Sigmoid colon (tissue), 7 donors: ENCODE measurements at regions of chr12 and their contacts with region 1.

Region 1: GRCh38 chr12:65051218-65051617 is 69.9 kb downstream of the WIF1 start:
- DNase-seq: no peak
- H3K4me3 ChIP-seq: no peak overlapping the region
- H3K27ac ChIP-seq: no peak overlapping the region
- H3K4me1 ChIP-seq: no peaks in the 10 kb centered on the region
- H3K27me3 ChIP-seq: peaks cover 0 to 2% (median 0%) of the 10 kb centered on the region in 3 donors
- CTCF ChIP-seq: no peak
- EP300 ChIP-seq: no peak
- POLR2A ChIP-seq: no peak

Region 2: DNA sequence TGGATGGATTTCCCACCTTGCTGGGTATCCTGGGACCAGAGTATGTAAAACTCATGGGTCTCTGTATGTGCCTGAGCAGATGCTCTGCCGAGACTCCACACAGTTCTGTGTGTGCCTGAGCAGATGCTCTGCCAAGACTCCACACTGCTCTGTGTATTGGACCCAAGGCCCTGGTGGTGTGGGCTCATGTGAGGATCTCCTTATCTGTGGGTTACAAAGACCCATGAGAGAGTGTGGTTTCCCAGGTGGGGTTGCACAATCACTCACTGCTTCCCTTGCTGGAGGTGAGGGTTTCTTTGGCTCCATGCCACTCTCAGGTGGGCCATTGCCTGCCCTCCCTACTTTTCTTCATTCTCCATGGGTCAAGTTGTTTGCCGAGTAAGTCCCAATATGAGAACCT is 85.3 kb before region 1 on chr12:
- intact Hi-C with region 1: no loop called
- DNase-seq: no peak
- H3K4me3 ChIP-seq: no peak overlapping the region
- H3K27ac ChIP-seq: no peak overlapping the region
- H3K4me1 ChIP-seq: no peaks in the 10 kb centered on the region
- H3K27me3 ChIP-seq: no peaks in the 10 kb centered on the region
- CTCF ChIP-seq: no peak
- EP300 ChIP-seq: no peak
- POLR2A ChIP-seq: no peak

Region 3: DNA sequence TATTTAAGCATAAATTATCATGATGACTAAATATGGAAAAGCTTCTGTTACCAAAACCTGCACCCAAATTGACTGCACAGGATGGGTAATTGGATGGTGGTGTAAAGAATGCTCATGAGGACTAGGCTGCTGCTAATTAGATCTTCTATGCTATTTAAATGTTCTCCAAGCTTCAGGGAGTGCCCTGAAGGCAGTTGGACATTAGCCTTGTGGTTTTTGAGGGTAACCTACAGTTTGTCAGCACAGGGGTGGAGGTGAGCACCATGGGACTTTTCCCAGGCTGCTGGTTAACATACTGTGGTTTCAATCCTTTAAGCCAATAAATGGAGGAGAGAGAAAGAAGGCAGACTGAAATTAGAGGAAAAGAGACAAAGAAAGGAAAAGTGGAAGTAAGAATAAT is 75.1 kb before region 1 on chr12:
- intact Hi-C with region 1: no loop called
- DNase-seq: no peak
- H3K4me3 ChIP-seq: no peak overlapping the region
- H3K27ac ChIP-seq: no peak overlapping the region
- H3K4me1 ChIP-seq: no peaks in the 10 kb centered on the region
- H3K27me3 ChIP-seq: no peaks in the 10 kb centered on the region
- CTCF ChIP-seq: no peak
- EP300 ChIP-seq: no peak
- POLR2A ChIP-seq: no peak

Region 4: GRCh38 chr12:65067383-65067782 is 16.2 kb after region 1 on chr12:
- intact Hi-C with region 1: loop called (anchors 1 kb)
- DNase-seq: no peak
- H3K4me3 ChIP-seq: no peak overlapping the region
- H3K27ac ChIP-seq: no peak overlapping the region
- H3K4me1 ChIP-seq: no peaks in the 10 kb centered on the region
- H3K27me3 ChIP-seq: no peaks in the 10 kb centered on the region
- CTCF ChIP-seq: no peak
- EP300 ChIP-seq: no peak
- POLR2A ChIP-seq: no peak

Region 5: DNA sequence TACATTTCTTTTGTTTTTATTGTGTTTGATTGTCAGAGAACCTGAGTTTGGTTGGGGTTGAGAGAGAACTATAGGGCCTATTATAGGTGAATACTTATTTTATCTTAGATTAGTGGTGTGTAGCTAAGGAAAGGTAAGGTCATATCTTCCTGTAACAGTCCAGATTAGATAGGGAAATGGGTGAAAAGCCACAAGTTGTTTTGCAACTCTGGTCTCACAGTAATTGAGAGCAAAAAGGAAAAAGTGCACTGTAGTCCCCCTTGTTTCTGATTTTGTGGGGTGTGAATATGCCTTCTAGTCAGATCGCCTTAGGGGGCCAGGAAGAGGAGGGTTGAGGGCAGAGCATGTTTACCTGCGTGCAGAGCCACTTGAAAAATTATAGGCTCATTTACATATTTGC is 236.2 kb after region 1 on chr12:
- intact Hi-C with region 1: no loop called
- DNase-seq: no peak
- H3K4me3 ChIP-seq: no peak overlapping the region
- H3K27ac ChIP-seq: no peak overlapping the region
- H3K4me1 ChIP-seq: peaks cover 0 to 57% (median 51%) of the 10 kb centered on the region in 4 donors
- H3K27me3 ChIP-seq: no peaks in the 10 kb centered on the region
- CTCF ChIP-seq: no peak
- EP300 ChIP-seq: no peak
- POLR2A ChIP-seq: no peak

Region 6: DNA sequence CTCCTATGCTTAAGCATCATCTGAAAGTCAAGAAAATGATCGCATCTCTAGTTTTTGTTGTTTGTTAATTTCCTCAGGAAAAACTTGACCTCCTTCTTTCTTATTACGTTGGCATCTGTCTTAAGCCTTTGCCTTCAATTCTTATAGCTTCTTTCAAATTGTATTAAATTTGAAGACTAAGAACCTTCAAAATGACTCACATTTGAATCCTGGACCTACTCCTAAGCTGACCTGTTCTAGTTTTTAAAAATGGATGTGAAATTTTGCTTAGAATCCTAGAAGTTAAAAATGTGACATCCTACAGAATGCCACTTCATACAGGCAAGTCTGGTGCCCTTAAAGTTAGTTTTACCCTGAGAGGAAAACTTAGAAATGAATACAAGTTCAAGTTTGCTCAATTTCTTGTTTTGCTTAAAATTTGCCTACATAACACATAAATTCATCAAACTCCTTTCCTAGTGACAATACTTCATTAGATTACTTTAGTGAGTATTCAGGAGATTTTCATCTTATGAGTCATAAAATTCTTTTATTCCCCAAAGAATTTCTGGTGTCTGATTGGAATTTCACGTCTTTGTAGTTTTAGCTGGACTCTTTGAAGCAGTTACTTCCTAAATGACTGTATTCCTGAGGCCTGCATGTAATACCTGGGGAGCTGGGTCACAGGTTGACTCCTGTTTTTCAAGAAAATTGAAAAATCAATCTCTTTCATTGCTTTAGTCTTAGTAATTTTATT is 379.5 kb after region 1 on chr12:
- intact Hi-C with region 1: no loop called
- DNase-seq: no peak
- H3K4me3 ChIP-seq: no peak overlapping the region
- H3K27ac ChIP-seq: peak overlapping the region in 1 of 4 donors; percentile 3
- H3K4me1 ChIP-seq: peaks cover 0 to 25% (median 18%) of the 10 kb centered on the region in 4 donors
- H3K27me3 ChIP-seq: no peaks in the 10 kb centered on the region
- CTCF ChIP-seq: no peak
- EP300 ChIP-seq: no peak
- POLR2A ChIP-seq: no peak